Activated B cell treated with CpG ODN at 0.5 μM for 24 hours (primary cell): ENCODE measurements at regions of chr4 and their contacts with region 1.

Region 1: DNA sequence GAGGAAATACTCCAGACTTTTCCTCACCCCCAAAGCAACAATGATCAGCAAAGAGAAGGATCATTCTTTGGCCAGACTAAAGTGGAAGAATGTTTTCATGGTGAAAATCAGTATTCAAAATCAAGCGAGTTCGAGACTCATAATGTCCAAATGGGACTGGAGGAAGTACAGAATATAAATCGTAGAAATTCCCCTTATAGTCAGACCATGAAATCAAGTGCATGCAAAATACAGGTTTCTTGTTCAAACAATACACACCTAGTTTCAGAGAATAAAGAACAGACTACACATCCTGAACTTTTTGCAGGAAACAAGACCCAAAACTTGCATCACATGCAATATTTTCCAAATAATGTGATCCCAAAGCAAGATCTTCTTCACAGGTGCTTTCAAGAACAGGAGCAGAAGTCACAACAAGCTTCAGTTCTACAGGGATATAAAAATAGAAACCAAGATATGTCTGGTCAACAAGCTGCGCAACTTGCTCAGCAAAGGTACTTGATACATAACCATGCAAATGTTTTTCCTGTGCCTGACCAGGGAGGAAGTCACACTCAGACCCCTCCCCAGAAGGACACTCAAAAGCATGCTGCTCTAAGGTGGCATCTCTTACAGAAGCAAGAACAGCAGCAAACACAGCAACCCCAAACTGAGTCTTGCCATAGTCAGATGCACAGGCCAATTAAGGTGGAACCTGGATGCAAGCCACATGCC is 89.7 kb downstream of the TET2 start:
- DNase-seq: no peak
- ATAC-seq: peak; percentile 68
- H3K4me3 Mint-ChIP-seq: peak overlapping the region; percentile 46
- H3K27ac Mint-ChIP-seq: peak overlapping the region; percentile 73
- H3K4me1 Mint-ChIP-seq: peaks cover 65% of the 10 kb centered on the region
- H3K27me3 Mint-ChIP-seq: no peaks in the 10 kb centered on the region
- CTCF ChIP-seq: no peak

Region 2: GRCh38 chr4:105191621-105192210 is 44.6 kb before region 1 on chr4:
- CTCF ChIA-PET with region 1: no interaction called
- POLR2A ChIA-PET with region 1: no interaction called
- intact Hi-C with region 1: loop called (anchors 5 kb)
- DNase-seq: no peak
- ATAC-seq: peak; percentile 73
- H3K4me3 Mint-ChIP-seq: peak overlapping the region; percentile 25
- H3K27ac Mint-ChIP-seq: peak overlapping the region; percentile 77
- H3K4me1 Mint-ChIP-seq: peaks cover 79% of the 10 kb centered on the region
- H3K27me3 Mint-ChIP-seq: no peaks in the 10 kb centered on the region
- CTCF ChIP-seq: no peak

Region 3: DNA sequence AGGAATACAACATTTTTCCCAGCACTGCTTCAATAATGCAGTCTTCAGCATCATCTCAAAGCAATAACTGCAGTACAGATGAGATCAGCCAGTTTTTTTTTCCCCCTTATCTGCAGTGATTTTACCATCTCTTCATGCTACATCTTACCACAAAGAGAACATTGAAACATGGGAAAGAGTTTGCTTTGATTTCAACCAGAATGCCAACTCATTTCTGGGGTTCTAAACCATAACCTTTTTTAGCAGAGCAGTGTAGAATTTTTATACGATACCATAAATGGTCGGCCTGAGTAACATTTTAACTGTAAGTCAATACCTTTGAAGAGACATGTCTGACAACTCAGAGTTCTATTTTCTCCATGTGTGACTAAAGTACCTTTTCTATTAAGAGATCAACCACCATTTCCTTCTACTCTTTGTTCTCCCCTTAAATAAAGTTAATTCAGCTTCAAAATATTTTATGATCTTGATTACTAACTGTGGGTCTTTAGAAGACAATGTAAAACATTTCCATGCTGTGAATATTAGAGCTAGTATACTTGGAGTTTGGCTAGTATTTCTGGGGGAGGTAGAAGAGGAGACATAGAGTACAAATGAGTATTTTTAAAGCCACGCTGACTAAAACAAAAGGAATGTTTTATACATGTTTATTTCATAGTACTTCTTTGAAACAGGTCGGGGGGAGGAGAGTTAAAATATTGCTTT is 20.6 kb before region 1 on chr4:
- CTCF ChIA-PET with region 1: no interaction called
- POLR2A ChIA-PET with region 1: no interaction called
- intact Hi-C with region 1: no loop called
- DNase-seq: no peak
- ATAC-seq: no peak
- H3K4me3 Mint-ChIP-seq: no peak overlapping the region
- H3K27ac Mint-ChIP-seq: no peak overlapping the region
- H3K4me1 Mint-ChIP-seq: peaks cover 18% of the 10 kb centered on the region
- H3K27me3 Mint-ChIP-seq: no peaks in the 10 kb centered on the region
- CTCF ChIP-seq: no peak

Region 4: DNA sequence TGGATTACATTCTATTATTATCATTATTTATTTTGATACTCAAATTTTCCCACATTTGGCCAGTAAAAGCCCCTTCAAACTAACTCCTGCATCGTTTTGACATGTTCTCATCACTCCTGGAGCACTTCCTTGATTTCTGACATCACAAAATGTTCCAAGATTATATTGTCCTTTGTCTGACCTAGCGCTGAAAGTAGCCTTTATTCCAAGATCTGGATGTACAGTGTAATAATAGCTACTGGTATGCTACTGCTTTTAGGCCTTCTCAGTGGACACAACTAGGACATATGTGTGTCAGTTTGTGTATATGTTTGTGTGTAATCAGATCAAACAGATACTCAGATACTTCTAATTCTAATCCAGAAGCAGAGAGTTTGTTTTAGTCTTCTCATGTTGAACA is 548.4 kb after region 1 on chr4:
- CTCF ChIA-PET with region 1: no interaction called
- POLR2A ChIA-PET with region 1: no interaction called
- intact Hi-C with region 1: no loop called
- DNase-seq: no peak
- ATAC-seq: no peak
- H3K4me3 Mint-ChIP-seq: no peak overlapping the region
- H3K27ac Mint-ChIP-seq: no peak overlapping the region
- H3K4me1 Mint-ChIP-seq: no peaks in the 10 kb centered on the region
- H3K27me3 Mint-ChIP-seq: no peaks in the 10 kb centered on the region
- CTCF ChIP-seq: no peak